GM18951 (cell line): ENCODE measurements at regions of chr6 and their contacts with region 1.

Region 1: GRCh38 chr6:34248727-34249551 is at the start of gene SMIM29:
- POLR2A ChIP-seq: peak; percentile 78

Region 2: GRCh38 chr6:34414999-34415858 is 166.3 kb after region 1 on chr6:
- in situ Hi-C with region 1: loop called (anchors 5 kb)
- POLR2A ChIP-seq: peak; percentile 24

Region 3: DNA sequence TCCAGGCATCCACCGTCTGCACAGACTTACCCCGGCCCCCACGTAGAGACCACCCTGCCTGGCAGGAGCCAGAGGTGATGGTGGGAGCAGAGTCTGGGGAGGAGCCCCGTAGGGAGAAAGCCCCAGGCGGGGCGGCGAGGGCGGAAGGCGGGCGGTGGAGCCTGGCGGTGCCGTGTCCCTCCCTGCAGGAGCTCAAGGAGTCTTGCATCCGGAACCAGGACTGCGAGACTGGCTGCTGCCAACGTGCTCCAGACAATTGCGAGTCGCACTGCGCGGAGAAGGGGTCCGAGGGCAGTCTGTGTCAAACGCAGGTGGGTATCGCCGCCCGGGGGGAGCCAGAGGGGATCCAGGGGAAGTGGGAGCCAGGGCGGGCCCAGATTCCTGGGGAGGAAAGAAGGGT is 1537.9 kb after region 1 on chr6:
- in situ Hi-C with region 1: no loop called
- POLR2A ChIP-seq: no peak